ENCODE measurements at regions of chr12 and their contacts with region 1.

Region 1: DNA sequence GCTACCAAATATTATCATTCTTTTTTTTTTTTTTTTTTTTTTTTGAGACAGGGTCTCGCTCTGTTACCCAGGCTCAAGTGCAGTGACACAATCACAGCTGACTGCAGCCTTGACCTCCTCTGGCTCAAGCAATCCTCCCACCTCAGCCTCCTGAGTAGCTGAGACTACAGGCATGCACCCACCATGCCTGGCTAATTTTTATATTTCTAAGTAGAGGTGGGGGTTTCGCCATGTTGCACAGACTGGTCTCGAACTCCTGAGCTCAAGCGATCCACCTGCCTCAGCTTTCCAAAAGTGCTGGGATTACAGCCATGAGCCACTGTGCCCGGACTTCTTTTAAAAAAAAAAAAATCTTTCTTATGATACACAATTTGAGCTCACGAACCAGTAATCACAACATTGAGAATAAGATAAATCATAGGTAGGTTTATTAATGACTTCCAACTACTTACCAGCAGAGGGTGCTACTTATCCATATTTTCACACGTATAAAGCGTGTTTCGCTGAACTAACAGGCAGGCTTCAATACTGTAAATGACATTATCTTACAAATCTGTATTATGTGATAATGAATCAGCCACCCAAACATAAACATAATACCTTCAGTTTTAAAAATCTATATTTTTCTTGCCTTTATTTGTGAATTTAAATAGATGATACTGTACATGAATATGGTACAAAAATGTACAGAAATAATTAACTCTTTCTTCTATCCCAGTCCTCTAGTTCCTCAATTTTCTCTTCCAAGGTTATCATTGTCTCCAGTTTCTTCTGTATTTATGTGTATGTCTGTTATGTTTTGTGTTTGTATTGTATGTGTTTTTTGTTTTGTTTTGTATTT is 42.5 kb upstream of the BCAT1 start:
- DNase-seq: no peak
- ATAC-seq: peak; percentile 65
- H3K4me3 Mint-ChIP-seq: no peak overlapping the region
- H3K27ac Mint-ChIP-seq: no peak overlapping the region
- H3K4me1 Mint-ChIP-seq: peaks cover 46% of the 10 kb centered on the region
- H3K27me3 Mint-ChIP-seq: no peaks in the 10 kb centered on the region
- CTCF ChIP-seq: no peak

Region 2: GRCh38 chr12:24728366-24728765 is 263.1 kb before region 1 on chr12:
- CTCF ChIA-PET with region 1: no interaction called
- POLR2A ChIA-PET with region 1: no interaction called
- intact Hi-C with region 1: no loop called
- DNase-seq: no peak
- ATAC-seq: peak; percentile 26
- H3K4me3 Mint-ChIP-seq: no peak overlapping the region
- H3K27ac Mint-ChIP-seq: peak overlapping the region; percentile 85
- H3K4me1 Mint-ChIP-seq: peaks cover 98% of the 10 kb centered on the region
- H3K27me3 Mint-ChIP-seq: no peaks in the 10 kb centered on the region
- CTCF ChIP-seq: no peak

Region 3: DNA sequence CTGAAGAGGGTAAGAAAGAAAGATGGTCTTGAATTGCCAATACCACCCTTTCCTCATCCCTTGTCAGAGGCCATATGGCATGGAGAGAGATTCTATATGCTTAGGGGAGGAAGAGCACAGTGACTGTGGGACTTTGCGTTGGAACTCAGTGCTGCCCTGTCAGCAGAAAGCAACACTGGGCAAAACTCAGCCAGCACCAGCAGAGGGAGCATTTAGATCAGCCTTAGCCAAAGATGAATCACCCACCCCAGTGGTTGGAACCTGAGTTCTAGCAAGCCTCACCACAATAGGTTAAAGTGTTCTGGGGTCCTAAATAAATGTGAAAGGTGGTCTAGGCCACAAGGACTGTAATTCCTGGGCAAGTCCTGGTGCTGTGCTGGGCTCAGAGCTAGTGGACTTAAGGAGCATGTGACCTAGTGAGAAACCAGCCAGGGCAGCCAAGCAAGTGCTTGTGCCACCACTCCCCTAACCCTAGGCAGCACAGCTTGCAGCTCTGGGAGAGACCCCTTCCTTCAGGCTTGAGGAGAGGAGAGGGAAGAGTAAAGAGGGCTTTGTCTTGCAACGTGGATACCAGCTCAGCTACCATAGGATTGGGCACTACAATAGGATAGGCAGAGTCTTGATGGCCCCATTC is 31.1 kb before region 1 on chr12:
- CTCF ChIA-PET with region 1: interaction called, 3 read pairs
- POLR2A ChIA-PET with region 1: interaction called, 4 read pairs
- intact Hi-C with region 1: loop called (anchors 2 kb)
- DNase-seq: no peak
- ATAC-seq: peak; percentile 79
- H3K4me3 Mint-ChIP-seq: no peak overlapping the region
- H3K27ac Mint-ChIP-seq: no peak overlapping the region
- H3K4me1 Mint-ChIP-seq: peaks cover 14% of the 10 kb centered on the region
- H3K27me3 Mint-ChIP-seq: no peaks in the 10 kb centered on the region
- CTCF ChIP-seq: no peak

Region 4: GRCh38 chr12:25074954-25075353 is 83.5 kb after region 1 on chr12:
- CTCF ChIA-PET with region 1: interaction called, 5 read pairs
- POLR2A ChIA-PET with region 1: interaction called, 5 read pairs
- intact Hi-C with region 1: loop called (anchors 1 kb)
- DNase-seq: no peak
- ATAC-seq: peak; percentile 40
- H3K4me3 Mint-ChIP-seq: peak overlapping the region; percentile 22
- H3K27ac Mint-ChIP-seq: peak overlapping the region; percentile 61
- H3K4me1 Mint-ChIP-seq: peaks cover 62% of the 10 kb centered on the region
- H3K27me3 Mint-ChIP-seq: no peaks in the 10 kb centered on the region
- CTCF ChIP-seq: no peak

Region 5: DNA sequence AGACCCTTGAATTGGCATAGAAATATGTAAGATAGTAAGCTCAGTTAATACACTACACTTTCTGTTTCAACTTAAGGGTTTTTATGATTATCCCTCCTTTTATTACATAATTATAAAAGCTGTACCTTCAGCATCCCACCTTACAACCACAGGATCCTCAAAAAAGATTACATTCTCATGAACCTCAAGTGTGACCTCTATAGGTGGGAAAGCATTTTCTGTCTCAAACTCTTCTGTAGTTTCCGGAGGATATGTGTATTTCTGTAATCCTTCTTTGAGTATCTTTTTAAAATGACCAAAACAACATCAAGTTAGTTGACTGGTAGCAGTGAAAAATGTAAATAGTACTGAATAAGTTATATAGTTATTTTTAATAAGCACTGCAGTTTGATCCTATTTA is 127.6 kb after region 1 on chr12:
- CTCF ChIA-PET with region 1: interaction called, 29 read pairs
- POLR2A ChIA-PET with region 1: interaction called, 3 read pairs
- intact Hi-C with region 1: no loop called
- DNase-seq: no peak
- ATAC-seq: no peak
- H3K4me3 Mint-ChIP-seq: no peak overlapping the region
- H3K27ac Mint-ChIP-seq: no peak overlapping the region
- H3K4me1 Mint-ChIP-seq: peaks cover 6% of the 10 kb centered on the region
- H3K27me3 Mint-ChIP-seq: no peaks in the 10 kb centered on the region
- CTCF ChIP-seq: no peak

Region 6: GRCh38 chr12:25186788-25187397 is 195.5 kb after region 1 on chr12:
- CTCF ChIA-PET with region 1: no interaction called
- POLR2A ChIA-PET with region 1: interaction called, 11 read pairs
- intact Hi-C with region 1: no loop called
- DNase-seq: no peak
- ATAC-seq: peak; percentile 69
- H3K4me3 Mint-ChIP-seq: peak overlapping the region; percentile 78
- H3K27ac Mint-ChIP-seq: peak overlapping the region; percentile 26
- H3K4me1 Mint-ChIP-seq: peaks cover 10% of the 10 kb centered on the region
- H3K27me3 Mint-ChIP-seq: no peaks in the 10 kb centered on the region
- CTCF ChIP-seq: no peak